WTC11 (cell line): ENCODE measurements at regions of chr4 and their contacts with region 1.

Region 1: GRCh38 chr4:80215449-80216052 is 18.2 kb downstream of the PRDM8 start:
- DNase-seq: no peak
- ATAC-seq: no peak
- H3K4me3 Mint-ChIP-seq: no peak overlapping the region
- H3K27ac Mint-ChIP-seq: no peak overlapping the region
- H3K4me1 Mint-ChIP-seq: no peaks in the 10 kb centered on the region
- H3K27me3 Mint-ChIP-seq: peaks cover 55% of the 10 kb centered on the region
- CTCF ChIP-seq: peak; percentile 47; the same call in 1 of the 2 replicates

Region 2: DNA sequence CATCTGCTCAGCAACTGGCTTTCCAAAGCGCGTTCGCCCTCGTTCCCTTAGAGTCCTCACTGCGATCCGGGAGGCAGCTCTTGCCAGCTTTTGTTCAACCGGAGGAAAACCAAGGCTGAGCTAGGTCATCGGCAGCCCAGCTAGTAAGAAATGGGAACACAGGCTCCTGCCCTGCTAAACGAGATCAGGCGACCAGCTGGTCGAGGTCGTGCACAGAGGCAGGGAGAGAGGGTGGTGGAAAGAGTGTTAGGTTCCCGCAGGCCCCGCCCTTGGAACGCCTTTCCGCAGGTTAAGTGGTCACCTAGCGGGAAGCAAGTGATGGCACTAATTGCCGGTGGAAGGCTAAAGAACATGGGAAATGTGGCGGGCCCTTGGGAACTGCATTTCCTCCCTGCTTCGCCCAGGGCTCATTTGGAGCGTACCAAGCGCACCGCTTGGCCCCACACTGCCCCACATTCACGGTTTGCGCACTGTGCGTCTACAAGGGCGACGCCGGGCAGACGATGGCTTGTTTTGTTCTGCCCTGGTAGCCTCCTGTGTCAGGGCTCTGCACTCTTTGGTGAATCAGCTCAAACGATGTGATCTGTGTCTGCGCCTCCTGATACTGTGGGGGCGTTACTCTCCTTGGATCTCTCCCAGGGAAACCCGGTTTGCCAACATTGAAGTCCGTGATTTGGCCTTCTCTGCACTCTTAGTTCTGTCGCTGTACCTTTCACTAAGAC is 25.4 kb before region 1 on chr4:
- CTCF ChIA-PET with region 1: interaction called, 4 read pairs
- POLR2A ChIA-PET with region 1: interaction called, 10 read pairs
- DNase-seq: peak; percentile 76
- ATAC-seq: peak; percentile 76
- H3K4me3 Mint-ChIP-seq: peak overlapping the region; percentile 59
- H3K27ac Mint-ChIP-seq: no peak overlapping the region
- H3K4me1 Mint-ChIP-seq: peaks cover 35% of the 10 kb centered on the region
- H3K27me3 Mint-ChIP-seq: peaks cover 100% of the 10 kb centered on the region
- CTCF ChIP-seq: no peak